HEK293 (cell line): ENCODE measurements at regions of chr17 and their contacts with region 1.

Region 1: GRCh38 chr17:6989779-6990178 is 6.1 kb upstream of the ALOX12 start:
- H3K4me3 ChIP-seq: no peak overlapping the region
- H3K27ac ChIP-seq: no peak overlapping the region
- H3K4me1 ChIP-seq: no peaks in the 10 kb centered on the region
- CTCF ChIP-seq: no peak

Region 2: DNA sequence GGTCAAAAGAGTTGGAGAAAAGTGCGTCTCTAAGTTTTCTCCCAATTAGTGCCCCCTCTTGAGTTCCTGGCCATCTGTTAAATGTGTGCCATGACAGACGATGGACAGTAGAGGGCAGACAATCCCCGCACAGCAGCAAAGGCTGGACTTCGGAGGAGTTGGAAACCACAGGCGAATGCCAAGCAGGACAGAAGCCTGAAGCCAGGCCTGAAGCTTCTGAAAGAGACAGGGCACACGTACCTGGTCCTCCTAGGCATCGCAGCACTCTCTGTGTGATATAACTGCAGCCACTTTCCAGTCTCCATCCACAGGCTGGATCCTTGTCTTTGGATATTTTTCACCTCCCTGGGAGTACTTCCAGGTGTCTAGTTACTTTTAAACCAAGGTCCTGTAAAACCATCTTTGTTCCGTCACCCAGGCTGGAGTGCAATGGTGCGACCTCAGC is 323.7 kb before region 1 on chr17:
- CTCF ChIA-PET with region 1: interaction called, 12 read pairs
- POLR2A ChIA-PET with region 1: no interaction called
- H3K4me3 ChIP-seq: no peak overlapping the region
- H3K27ac ChIP-seq: no peak overlapping the region
- H3K4me1 ChIP-seq: no peaks in the 10 kb centered on the region
- CTCF ChIP-seq: peak; percentile 86

Region 3: DNA sequence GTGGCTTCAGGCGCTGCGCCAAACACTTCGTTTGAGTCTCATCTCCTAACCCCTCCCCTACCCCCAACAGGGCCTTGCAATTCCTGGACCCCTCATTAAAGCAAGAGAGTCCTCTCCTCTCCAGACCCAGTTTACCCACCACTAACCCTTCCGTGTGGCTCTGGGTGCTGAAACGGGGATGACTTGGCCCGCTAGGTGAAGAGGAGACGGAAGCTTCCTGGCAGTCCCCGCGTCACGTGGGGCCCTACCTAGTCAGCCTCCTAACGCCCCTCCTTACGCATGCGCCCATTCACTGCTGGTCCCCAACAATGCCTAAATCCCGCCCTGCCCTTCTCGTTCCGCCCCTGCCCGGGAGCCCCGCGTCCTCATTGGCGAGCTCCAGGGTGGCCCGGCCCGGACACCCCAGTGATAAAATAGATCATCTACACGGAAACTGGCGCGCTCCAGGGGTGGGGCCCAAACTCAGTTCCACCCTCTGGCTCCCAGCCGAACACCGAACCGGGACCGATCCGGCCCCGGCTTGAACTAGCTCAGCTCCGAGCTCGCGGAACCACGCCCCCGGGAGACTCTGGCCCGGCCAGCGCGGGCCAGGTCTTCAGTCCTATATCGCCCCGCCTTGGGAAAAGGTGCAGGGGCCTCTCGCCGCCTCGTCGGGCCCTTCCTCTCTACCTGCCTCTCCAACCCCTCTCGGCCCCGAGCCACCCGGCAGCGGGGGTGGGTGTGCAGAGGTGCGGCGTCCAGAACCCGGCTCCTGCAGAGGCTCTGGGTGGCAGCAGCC is 46.0 kb after region 1 on chr17 and contains the start of gene SLC16A13:
- CTCF ChIA-PET with region 1: no interaction called
- POLR2A ChIA-PET with region 1: no interaction called
- H3K4me3 ChIP-seq: peak within 1 kb of the TSS; percentile 79
- H3K27ac ChIP-seq: peak within 1 kb of the TSS; percentile 62
- H3K4me1 ChIP-seq: 0 out of 2 replicates have a peak, but pooled peaks cover 2% of the 10 kb centered on the region
- CTCF ChIP-seq: 0 out of 2 replicates have a peak, but pooled peaks have one; percentile 24

Region 4: DNA sequence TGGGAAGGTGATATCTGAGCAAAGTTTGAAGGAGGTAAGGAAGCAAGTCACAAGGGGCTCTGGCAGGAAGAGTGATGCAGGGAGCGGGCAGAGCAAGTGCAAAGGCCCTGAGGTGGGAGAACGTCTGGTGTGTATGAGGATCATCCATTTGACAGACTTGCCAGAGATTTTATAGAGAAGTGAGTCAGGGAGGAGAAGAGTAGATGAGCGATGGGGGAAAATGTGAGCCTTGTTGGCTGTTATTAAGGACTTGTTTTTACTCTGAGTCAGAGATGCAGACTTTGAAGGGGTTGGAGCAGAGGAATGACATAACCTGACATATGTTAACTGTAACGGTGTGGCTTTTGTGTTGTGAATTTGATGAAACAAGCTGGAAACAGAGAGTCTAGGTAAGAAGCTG is 93.8 kb after region 1 on chr17:
- CTCF ChIA-PET with region 1: no interaction called
- POLR2A ChIA-PET with region 1: no interaction called
- H3K4me3 ChIP-seq: no peak overlapping the region
- H3K27ac ChIP-seq: no peak overlapping the region
- H3K4me1 ChIP-seq: no peaks in the 10 kb centered on the region
- CTCF ChIP-seq: no peak

Region 5: GRCh38 chr17:7177196-7177953 is 187.6 kb after region 1 on chr17:
- CTCF ChIA-PET with region 1: no interaction called
- POLR2A ChIA-PET with region 1: no interaction called
- H3K4me3 ChIP-seq: peak overlapping the region; percentile 54
- H3K27ac ChIP-seq: peak overlapping the region; percentile 39; the same call in 1 of the 2 replicates
- H3K4me1 ChIP-seq: peaks cover 8% of the 10 kb centered on the region
- CTCF ChIP-seq: peak; percentile 88